Calu3 (cell line): ENCODE measurements at regions of chr17 and their contacts with region 1.

Region 1: DNA sequence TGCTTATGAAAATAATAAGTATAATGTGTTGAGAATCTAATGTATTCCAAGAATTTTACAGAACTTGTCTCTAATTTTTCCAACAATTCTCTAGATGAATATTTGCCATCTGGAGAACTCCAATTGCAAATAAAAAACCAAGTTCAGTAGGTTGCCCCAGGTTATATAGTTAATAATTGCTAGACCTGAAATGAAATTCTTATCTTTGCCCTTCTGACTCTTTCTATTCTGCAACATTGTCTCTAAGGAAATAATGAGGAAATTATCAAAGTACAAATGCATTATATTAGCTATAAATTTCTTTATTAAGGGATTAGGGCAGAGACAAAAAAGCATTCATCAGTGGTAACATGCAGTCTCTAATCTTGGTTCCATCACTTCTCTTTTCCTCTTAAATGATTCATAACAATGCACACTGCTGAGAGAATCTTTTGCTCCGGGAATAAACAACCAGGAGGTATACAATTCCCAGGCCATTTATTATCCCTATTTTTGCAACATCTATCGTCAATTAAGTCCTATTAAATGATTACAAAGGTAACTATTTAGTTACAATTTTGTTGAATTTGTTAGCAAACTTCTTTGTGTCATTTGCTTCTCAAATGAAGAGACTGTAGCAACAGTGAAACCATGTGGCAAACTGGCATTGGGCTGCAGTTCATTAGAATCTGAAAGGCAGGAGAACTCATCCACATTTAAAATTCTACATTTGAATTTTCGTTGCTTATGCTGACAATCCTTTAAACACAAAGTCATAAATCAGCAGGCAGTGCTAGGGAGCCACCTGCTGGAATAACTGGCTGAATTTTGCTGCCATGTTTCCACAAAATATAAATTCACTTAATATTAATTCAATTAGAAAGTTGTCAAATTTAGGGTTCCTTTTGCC is 349.6 kb downstream of the KIF2B start:
- DNase-seq: peak; percentile 28
- H3K4me3 Mint-ChIP-seq: no peak overlapping the region
- H3K27ac Mint-ChIP-seq: no peak overlapping the region
- H3K4me1 Mint-ChIP-seq: no peaks in the 10 kb centered on the region
- H3K27me3 Mint-ChIP-seq: no peaks in the 10 kb centered on the region
- CTCF ChIP-seq: no peak

Region 2: GRCh38 chr17:52383493-52384100 is 1788.7 kb before region 1 on chr17:
- CTCF ChIA-PET with region 1: no interaction called
- intact Hi-C with region 1: loop called (anchors 10 kb)
- DNase-seq: peak; percentile 17
- H3K4me3 Mint-ChIP-seq: no peak overlapping the region
- H3K27ac Mint-ChIP-seq: no peak overlapping the region
- H3K4me1 Mint-ChIP-seq: no peaks in the 10 kb centered on the region
- H3K27me3 Mint-ChIP-seq: no peaks in the 10 kb centered on the region
- CTCF ChIP-seq: no peak

Region 3: DNA sequence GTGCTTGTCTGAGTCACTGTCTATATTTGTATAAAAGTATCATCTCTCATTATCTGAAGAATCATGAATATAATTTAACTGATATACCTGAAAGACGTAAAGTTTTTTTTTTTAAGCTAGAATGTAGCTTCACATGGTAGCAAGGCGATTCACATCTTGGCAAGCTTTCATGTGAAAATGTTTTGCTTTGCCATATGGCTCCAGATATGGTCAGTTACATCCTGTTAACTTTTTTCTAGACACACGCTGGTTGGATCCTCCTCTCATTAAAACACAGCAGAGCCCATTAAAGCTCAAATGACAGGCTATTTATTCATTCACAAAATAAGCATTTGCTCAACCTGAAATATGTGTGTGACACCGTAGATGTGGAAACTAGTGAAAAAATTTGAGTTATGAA is 63.2 kb after region 1 on chr17:
- CTCF ChIA-PET with region 1: no interaction called
- intact Hi-C with region 1: no loop called
- DNase-seq: no peak
- H3K4me3 Mint-ChIP-seq: no peak overlapping the region
- H3K27ac Mint-ChIP-seq: no peak overlapping the region
- H3K4me1 Mint-ChIP-seq: no peaks in the 10 kb centered on the region
- H3K27me3 Mint-ChIP-seq: no peaks in the 10 kb centered on the region
- CTCF ChIP-seq: no peak

Region 4: GRCh38 chr17:54891176-54891821 is 719.0 kb after region 1 on chr17:
- CTCF ChIA-PET with region 1: no interaction called
- intact Hi-C with region 1: loop called (anchors 10 kb)
- DNase-seq: peak; percentile 28
- H3K4me3 Mint-ChIP-seq: no peak overlapping the region
- H3K27ac Mint-ChIP-seq: no peak overlapping the region
- H3K4me1 Mint-ChIP-seq: peaks cover 7% of the 10 kb centered on the region
- H3K27me3 Mint-ChIP-seq: no peaks in the 10 kb centered on the region
- CTCF ChIP-seq: peak; percentile 22